Activated T-helper 2 cell treated with anti-CD3 and anti-CD28 coated beads, Interferon-gamma antibody, Interleukin-2, Interleukin-4, amounts not matched to agents 10 μg/mL and 5 μg/mL and 100 μg/mL, durations not matched to agents 14 hours and 24 hours and 36 hours (primary cell): ENCODE measurements at regions of chr6 and their contacts with region 1.

Region 1: GRCh38 chr6:15962449-15962764 is 166.5 kb upstream of the MYLIP start:
- DNase-seq: peak; percentile 39
- H3K4me3 Mint-ChIP-seq: no peak overlapping the region
- H3K27ac Mint-ChIP-seq: peak overlapping the region; percentile 86
- H3K4me1 Mint-ChIP-seq: peaks cover 32% of the 10 kb centered on the region
- H3K27me3 Mint-ChIP-seq: no peaks in the 10 kb centered on the region

Region 2: GRCh38 chr6:15936503-15936902 is 25.9 kb before region 1 on chr6:
- intact Hi-C with region 1: no loop called
- DNase-seq: no peak
- H3K4me3 Mint-ChIP-seq: no peak overlapping the region
- H3K27ac Mint-ChIP-seq: no peak overlapping the region
- H3K4me1 Mint-ChIP-seq: peaks cover 2% of the 10 kb centered on the region
- H3K27me3 Mint-ChIP-seq: no peaks in the 10 kb centered on the region

Region 3: GRCh38 chr6:15996030-15996429 is 33.6 kb after region 1 on chr6:
- intact Hi-C with region 1: loop called (anchors 2 kb)
- DNase-seq: no peak
- H3K4me3 Mint-ChIP-seq: no peak overlapping the region
- H3K27ac Mint-ChIP-seq: peak overlapping the region; percentile 55
- H3K4me1 Mint-ChIP-seq: peaks cover 24% of the 10 kb centered on the region
- H3K27me3 Mint-ChIP-seq: no peaks in the 10 kb centered on the region